Activated naive CD4-positive, alpha-beta T cell treated with anti-CD3 and anti-CD28 coated beads for 36 hours (primary cell): ENCODE measurements at regions of chr7 and their contacts with region 1.

Region 1: DNA sequence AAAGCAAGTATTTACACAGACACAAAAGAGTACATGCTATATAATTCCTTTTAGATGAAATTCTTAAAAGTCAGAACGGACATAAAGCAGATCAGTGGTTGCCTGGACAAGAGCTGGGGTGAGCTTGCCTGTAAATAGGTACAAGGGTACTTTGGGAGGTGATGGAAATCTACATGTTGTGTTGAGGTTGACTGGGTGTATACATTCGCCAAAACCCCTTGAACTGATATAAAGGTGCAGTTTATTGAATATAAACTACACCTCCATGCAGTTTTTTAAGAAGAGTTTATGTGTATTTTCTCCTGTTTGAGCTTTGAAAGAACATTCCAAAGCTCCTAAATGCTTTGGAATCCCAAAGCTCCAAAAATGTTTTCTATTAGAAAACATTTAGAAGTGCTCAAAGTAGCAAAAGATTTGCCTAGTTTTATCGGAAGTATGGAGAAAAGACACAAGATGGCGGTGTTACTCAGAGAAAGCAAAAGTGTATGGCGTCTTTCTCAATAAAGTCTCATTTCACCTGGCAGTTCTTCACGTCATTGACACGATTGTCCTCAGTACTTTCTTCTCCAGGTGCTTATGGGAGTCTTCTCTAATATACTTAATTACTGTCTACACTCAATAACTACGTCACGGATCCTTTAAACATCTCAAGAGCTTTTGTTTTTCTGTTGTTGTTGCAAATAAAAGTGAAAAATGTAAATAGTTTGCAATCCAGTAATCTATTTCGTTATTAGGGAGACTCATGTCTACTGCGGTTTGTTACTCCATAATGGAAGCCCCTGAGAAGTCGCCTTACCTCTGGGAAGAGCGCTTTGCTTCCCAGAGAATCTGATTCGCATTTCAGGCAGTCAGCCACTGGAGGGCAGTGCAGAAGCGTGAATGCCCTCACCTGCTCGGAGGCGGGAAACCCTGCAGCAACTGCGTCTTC is 14.7 kb upstream of the SEC61G start:
- DNase-seq: peak; percentile 86
- H3K4me3 Mint-ChIP-seq: peak overlapping the region; percentile 63
- H3K27ac Mint-ChIP-seq: peak overlapping the region; percentile 22
- H3K4me1 Mint-ChIP-seq: peaks cover 3% of the 10 kb centered on the region
- H3K27me3 Mint-ChIP-seq: peaks cover 17% of the 10 kb centered on the region

Region 2: GRCh38 chr7:54788664-54789063 is 14.9 kb after region 1 on chr7:
- CTCF ChIA-PET with region 1: interaction called, 5 read pairs
- intact Hi-C with region 1: loop called (anchors 1 kb)
- DNase-seq: peak; percentile 51
- H3K4me3 Mint-ChIP-seq: no peak overlapping the region
- H3K27ac Mint-ChIP-seq: no peak overlapping the region
- H3K4me1 Mint-ChIP-seq: peaks cover 6% of the 10 kb centered on the region
- H3K27me3 Mint-ChIP-seq: peaks cover 33% of the 10 kb centered on the region

Region 3: GRCh38 chr7:54823776-54824175 is 50.0 kb after region 1 on chr7:
- CTCF ChIA-PET with region 1: no interaction called
- intact Hi-C with region 1: loop called (anchors 1 kb)
- DNase-seq: no peak
- H3K4me3 Mint-ChIP-seq: no peak overlapping the region
- H3K27ac Mint-ChIP-seq: no peak overlapping the region
- H3K4me1 Mint-ChIP-seq: no peaks in the 10 kb centered on the region
- H3K27me3 Mint-ChIP-seq: peaks cover 20% of the 10 kb centered on the region

Region 4: DNA sequence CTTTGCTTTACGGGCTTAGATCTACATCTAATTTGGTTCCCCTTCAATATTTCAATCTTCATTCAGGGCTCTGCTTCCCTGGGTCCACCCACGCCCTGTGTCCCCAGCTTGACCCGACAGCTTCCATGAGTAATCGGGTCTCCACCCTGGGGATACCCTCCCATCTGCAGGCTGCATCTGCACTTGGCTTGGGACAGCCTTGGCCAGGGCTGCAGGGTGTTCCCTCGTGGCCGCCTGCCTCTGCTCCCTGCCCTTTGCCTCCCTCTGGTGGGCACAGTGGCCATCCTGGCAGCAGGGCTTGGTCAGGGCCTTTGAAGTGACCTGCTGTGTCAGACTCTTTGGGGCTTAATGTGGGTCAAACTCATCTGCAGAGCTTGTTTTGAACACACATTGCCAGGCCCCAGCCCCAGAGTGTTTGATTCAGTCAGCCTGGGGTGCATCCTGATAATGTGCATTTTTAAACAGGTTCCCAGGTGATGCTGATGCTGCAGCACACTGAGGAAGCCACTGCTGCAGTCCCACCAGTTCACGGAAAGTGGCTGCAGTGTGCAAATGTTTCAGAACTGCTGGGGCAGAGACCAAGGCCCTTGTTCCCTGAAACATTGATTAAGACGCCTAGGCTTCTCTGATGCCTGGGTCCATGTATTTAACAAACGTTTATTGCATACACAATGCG is 65.9 kb after region 1 on chr7:
- CTCF ChIA-PET with region 1: interaction called, 5 read pairs
- intact Hi-C with region 1: loop called (anchors 1 kb)
- DNase-seq: peak; percentile 6
- H3K4me3 Mint-ChIP-seq: no peak overlapping the region
- H3K27ac Mint-ChIP-seq: no peak overlapping the region
- H3K4me1 Mint-ChIP-seq: no peaks in the 10 kb centered on the region
- H3K27me3 Mint-ChIP-seq: peaks cover 7% of the 10 kb centered on the region

Region 5: GRCh38 chr7:54877683-54878082 is 103.9 kb after region 1 on chr7:
- CTCF ChIA-PET with region 1: no interaction called
- intact Hi-C with region 1: no loop called
- DNase-seq: no peak
- H3K4me3 Mint-ChIP-seq: no peak overlapping the region
- H3K27ac Mint-ChIP-seq: no peak overlapping the region
- H3K4me1 Mint-ChIP-seq: no peaks in the 10 kb centered on the region
- H3K27me3 Mint-ChIP-seq: peaks cover 9% of the 10 kb centered on the region

Region 6: DNA sequence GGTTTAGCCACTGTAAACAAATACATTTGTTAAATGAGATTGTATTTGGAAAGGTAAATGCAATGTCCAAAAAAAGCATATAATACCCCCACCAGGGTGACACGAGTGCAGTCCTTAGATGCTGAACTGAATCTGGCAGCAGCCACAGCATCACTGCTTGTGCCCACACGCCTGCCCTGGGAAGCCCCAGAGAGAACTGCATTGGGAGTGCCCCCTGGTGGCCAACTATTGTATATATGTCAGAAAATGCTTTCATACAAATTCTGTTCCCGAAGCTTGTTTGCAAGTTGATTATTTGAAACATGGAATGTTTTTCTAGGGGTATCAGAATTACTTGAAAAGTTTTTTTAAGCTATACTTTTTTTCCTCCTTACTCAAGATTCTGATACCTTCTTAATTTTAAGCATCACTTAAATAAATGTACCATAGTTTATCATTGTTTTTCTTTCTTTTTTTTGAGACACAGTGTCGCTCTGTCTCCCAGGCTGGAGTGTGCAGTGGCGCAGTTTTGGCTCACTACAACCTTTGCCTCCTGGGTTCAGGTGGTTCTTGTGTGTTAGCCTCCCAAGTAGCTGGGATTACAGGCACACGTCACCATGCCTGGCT is 641.5 kb after region 1 on chr7:
- CTCF ChIA-PET with region 1: interaction called, 4 read pairs
- intact Hi-C with region 1: loop called (anchors 1 kb)
- DNase-seq: peak; percentile 92
- H3K4me3 Mint-ChIP-seq: no peak overlapping the region
- H3K27ac Mint-ChIP-seq: no peak overlapping the region
- H3K4me1 Mint-ChIP-seq: peaks cover 2% of the 10 kb centered on the region
- H3K27me3 Mint-ChIP-seq: no peaks in the 10 kb centered on the region